ENCODE measurements at regions of chr19 and their contacts with region 1.

Region 1: GRCh38 chr19:488505-489417 is 7.5 kb upstream of the MADCAM1 start:
- DNase-seq: peak; percentile 98 to 99
- ATAC-seq: peak; percentile 98
- H3K4me3 ChIP-seq: peak overlapping the region; percentile 74 to 94
- H3K27ac ChIP-seq: peak overlapping the region in 1 of 2 donors; percentile 72
- H3K4me1 ChIP-seq: no peaks in the 10 kb centered on the region
- H3K27me3 ChIP-seq: no peaks in the 10 kb centered on the region

Region 2: DNA sequence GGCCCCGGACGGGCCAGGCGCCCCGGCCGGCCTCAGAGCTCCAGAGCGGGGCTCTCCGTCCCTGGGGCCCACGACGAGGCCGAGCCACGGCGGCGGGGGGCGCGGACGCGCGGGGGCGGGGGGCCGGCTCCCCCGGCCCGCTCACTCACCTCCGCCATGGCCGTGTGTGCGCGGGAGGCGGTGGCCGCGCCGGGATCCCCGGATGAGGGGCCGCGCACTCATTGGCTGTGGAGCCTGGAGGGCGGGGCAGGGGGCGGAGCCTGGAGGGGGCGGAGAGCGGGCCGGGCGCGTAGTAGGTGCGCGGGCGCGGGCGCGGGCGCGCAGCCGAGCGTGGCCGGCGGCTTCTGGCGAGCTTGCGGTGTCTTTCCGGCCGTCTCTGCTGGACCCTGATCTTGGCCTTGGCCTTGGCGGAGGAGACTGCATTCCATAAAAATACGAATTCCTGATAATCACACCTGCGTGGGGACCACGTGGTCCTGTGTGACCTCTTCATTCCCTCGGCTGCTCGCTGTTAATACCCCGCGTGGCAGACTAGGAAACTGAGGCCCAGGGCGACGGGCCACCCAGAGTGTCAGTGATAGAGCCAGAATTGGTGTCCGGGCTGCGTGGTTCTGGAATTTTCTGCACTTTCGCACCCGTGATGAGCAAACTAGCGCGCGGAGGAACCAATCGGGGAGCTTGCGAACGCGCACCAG is 144.0 kb before region 1 on chr19 and contains the start of gene MIER2:
- intact Hi-C with region 1: loop called in 1 of 2 experiments (anchors 10 kb)
- DNase-seq: peak; percentile 83 to 94
- ATAC-seq: peak; percentile 90
- H3K4me3 ChIP-seq: peak within 1 kb of the TSS; percentile 89 to 92
- H3K27ac ChIP-seq: no peak within 1 kb of the TSS
- H3K4me1 ChIP-seq: no peaks in the 10 kb centered on the region
- H3K27me3 ChIP-seq: no peaks in the 10 kb centered on the region
- total RNA-seq, gene MIER2: 26.4 to 31.1 TPM

Region 3: DNA sequence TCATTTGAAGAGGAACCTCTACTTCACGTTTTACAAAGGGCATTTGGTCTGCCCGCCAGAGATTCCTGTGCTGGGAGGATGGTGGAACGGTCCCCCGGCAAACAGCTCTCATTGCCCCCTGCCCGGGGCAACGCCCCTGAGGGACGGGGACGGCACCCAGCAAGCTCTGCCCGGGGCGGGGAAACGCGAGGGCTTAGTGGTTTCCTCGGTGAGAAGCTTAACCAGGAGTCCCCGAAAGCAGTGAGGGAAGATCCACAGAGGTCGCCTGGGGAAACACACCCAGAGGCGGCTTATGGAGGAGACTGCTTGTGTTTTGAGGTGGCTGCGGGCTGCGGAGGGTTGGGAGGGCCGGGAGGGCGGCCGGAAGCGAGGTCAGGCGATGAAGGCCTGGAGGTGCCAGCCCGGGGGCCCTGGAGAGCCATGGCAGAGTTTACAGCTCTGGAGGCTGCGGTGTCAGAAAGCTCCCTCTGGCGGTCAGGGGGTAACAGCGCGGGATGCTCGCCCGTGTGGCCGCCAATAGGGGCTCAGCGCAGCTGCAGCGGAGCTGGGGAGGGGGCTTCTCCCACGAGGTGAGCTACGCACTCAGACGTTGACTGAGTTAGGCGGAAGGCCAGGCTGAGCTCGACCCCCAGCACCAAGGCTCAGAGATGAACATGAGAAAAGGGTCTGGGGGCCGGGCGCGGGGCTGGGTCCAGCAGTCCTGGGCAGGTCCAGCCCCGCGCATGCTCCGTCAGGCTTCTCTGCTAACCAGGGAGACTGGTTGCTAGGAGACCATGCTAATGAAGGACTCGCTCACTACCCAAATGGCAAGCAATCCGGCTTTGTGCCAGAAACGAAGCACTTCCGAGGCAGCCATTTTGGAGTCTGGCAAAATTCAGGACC is 17.9 kb after region 1 on chr19:
- intact Hi-C with region 1: loop called in 1 of 2 experiments (anchors 2 kb)
- DNase-seq: peak; percentile 98 to 99
- ATAC-seq: peak; percentile 95
- H3K4me3 ChIP-seq: peak overlapping the region; percentile 60 to 98
- H3K27ac ChIP-seq: peak overlapping the region in 1 of 2 donors; percentile 80
- H3K4me1 ChIP-seq: no peaks in the 10 kb centered on the region
- H3K27me3 ChIP-seq: no peaks in the 10 kb centered on the region

Region 4: DNA sequence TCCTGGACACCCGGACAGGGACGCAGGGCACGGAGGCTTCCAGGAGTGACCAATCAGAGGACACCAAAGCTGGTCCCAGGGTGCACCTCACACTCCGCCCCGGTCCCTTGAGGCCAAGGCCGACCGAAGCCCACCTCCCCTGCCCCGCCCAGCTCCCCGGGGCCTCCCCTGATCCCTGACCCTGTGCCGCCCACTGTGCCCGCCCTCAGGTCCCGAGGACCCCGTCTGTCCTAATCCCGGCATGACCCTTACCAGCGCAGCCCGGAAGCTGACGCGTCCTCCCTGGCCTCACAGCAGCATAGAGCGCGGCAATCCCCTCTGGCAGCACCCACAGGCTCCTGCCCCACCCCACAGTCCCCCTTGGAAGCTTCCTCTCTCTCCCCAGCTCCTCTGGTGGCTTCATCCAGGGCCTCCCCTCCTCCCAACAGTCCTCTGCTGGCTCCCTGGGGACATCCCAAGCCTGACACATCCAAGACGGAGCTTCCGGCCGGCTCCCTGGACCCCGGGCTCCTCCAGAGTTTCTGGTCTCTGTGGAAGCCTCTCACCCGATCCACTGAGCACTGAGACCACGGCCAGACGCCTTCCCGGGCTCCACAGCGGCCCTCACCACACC is 35.4 kb after region 1 on chr19:
- intact Hi-C with region 1: no loop called
- DNase-seq: no peak
- ATAC-seq: peak; percentile 19
- H3K4me3 ChIP-seq: no peak overlapping the region
- H3K27ac ChIP-seq: no peak overlapping the region
- H3K4me1 ChIP-seq: no peaks in the 10 kb centered on the region
- H3K27me3 ChIP-seq: no peaks in the 10 kb centered on the region

Region 5: GRCh38 chr19:588093-588740 is 99.5 kb after region 1 on chr19:
- intact Hi-C with region 1: no loop called
- DNase-seq: no peak
- ATAC-seq: peak; percentile 2
- H3K4me3 ChIP-seq: no peak overlapping the region
- H3K27ac ChIP-seq: no peak overlapping the region
- H3K4me1 ChIP-seq: no peaks in the 10 kb centered on the region
- H3K27me3 ChIP-seq: no peaks in the 10 kb centered on the region